ENCODE measurements at regions of chr20 and their contacts with region 1.

Region 1: GRCh38 chr20:46089417-46090388 is at the start of gene NCOA5:
- DNase-seq: peak; percentile 94 to 99 (median 96)

Region 2: DNA sequence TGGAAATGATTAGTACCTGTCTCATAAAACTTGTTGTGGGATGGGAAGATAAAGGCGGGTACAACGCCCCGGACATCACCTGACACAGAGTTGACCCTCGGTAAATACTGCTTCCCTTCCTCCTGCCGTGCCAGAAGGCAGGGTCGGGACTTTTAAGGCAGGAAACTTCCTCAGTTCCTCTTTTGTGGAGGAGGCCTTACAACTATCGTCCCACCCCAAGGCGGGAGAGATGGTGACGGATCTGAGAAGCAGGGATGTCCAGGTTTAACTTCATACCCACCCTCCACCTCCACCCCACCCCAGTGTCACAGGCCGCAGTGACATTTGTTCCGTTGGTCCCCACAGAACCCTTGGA is 297.4 kb before region 1 on chr20:
- intact Hi-C with region 1: no loop called
- DNase-seq: no peak

Region 3: DNA sequence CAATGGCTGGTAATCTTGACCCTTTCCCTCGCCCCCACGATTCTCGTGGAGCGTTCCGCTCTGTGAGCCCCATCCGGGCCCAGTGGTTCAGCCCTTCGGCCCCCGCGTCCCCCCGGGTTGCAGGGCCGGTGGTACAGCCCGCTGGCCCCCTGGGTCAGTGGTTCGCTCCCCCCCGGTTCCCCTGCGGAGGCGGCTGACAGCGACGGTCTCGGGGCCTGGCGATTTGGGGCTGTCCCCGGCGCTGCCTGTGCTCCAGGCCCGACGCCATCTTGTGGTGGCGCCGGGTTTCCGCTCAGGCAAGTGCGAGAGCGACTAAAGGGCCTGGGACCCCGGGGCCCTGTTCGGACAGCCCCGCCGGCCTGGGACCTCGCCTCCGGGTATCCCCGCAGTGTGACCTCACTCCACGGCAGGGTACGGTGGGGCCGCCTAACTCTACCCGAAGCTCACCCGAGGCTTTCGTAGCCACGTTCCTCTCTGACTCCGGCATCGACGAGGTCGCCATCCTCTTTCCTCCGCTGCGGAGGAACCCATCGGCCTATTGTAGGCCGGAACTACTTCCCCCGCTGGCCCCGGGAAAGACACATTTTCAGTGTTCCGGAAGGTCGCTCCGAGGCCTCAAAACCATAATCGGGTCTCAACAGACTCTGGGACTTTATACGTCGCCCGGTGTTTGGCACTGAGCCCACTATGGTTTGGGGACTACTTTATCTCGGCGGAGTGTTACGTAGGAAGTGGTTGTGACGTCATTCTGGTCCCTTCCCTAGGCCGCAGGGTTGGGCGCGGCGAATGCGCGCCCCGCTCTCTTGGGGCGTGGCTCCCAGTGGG is 117.8 kb before region 1 on chr20 and contains the start of gene ZNF335:
- intact Hi-C with region 1: loop called (anchors 2 kb)
- DNase-seq: peak; percentile 89 to 99 (median 95)

Region 4: DNA sequence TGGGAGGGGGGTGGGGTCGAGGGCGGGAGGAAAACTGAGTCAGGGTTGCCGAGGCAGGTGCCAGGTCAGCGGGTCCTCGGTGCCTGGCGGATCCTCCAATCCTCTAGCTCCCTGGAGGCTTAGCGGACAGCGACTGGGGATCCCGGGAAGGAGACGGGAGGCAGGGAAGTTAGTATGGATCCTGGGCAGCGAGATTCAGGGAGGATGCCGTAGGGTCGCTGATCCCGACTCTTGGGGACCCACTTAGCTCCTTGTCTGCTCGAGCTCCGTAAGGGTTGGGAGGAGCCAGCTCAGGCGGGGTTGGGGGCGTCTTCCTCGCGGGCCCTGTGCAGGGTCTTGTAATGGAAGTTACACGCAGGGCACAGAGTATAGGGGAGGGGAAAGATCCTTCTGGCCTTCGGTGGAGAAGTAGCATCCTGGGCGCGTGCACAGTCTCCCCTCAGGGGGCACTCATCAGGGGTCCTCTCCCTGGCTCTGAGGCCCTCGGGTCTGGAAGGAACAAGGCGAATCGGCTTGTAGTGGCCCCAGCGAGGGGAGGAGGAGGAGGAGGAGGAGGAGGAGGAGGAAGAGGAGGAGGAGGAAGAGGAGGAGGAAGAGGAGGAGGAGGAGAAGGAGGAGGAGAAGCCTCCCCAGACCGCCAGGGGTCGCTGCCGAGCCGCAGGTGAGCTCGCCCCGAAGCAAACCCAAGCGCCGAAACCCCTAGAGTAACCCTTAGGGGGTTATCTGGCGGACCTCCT is 67.1 kb before region 1 on chr20:
- intact Hi-C with region 1: loop called (anchors 2 kb)
- DNase-seq: peak; percentile 64 to 95 (median 77)

Region 5: GRCh38 chr20:46132705-46133120 is 43.0 kb after region 1 on chr20:
- intact Hi-C with region 1: no loop called
- DNase-seq: peak; percentile 50 to 96 (median 74)